HAP-1 (cell line): ENCODE measurements at regions of chr1 and their contacts with region 1.

Region 1: DNA sequence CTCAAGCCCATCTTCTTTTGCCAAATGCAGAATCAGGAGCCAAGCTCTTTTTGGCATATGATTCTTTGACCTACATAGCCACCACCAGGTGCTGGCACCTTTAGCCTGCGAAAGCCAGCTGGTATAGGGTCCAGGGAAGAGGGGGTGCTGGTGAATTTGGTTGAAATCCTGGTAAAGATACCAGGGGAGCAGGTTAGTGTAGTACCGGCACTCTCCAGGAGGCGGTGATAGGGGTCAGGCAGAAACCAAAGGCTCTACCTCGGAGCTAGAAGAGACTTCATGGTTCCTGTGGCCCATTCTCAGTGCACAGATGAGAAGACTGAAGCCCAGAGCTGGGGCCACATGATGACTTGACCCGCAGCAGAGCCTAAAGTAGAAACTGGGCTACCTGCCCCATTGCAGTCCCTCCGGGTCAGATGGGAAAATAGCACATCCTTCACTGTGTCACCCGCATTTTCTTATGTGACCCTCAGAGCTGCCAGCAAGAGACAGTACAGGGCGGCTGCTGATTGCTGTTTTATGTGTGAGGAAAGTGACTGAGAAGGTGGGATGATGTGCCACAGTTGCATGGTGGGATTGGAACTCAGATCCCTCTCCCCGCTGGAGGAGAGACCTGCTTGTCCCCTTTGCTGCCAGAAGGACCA is 36.0 kb upstream of the IL19 start:
- DNase-seq: peak in 1 of 2 experiments; percentile 82
- H3K4me3 ChIP-seq: no peak overlapping the region
- H3K4me1 ChIP-seq: no peaks in the 10 kb centered on the region
- H3K27me3 ChIP-seq: no peaks in the 10 kb centered on the region

Region 2: GRCh38 chr1:207335695-207336363 is 601.2 kb after region 1 on chr1:
- in situ Hi-C with region 1: no loop called
- DNase-seq: no peak
- H3K4me3 ChIP-seq: no peak overlapping the region
- H3K4me1 ChIP-seq: no peaks in the 10 kb centered on the region
- H3K27me3 ChIP-seq: no peaks in the 10 kb centered on the region

Region 3: DNA sequence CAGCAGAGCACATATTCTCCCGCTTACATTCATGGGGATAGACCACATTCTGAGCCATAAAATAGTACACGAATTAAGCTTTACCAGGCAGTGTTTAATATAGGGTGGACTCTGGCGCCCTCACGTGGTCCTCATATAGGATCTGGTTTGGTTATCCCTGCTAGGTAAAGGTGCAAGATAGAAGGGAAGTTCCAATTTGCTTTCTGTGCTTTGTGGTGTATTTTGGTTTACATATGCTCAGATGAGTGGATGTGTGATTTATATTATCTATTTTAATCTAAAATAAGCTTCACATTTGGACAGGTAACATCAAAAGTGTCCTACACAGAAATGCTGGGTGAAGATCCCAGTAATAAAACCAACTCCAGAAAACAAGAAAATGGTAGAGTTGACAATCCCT is 765.0 kb after region 1 on chr1:
- in situ Hi-C with region 1: loop called (anchors 25 kb)
- DNase-seq: peak; percentile 55 to 72
- H3K4me3 ChIP-seq: no peak overlapping the region
- H3K4me1 ChIP-seq: no peaks in the 10 kb centered on the region
- H3K27me3 ChIP-seq: peaks cover 66% of the 10 kb centered on the region